MCF 10A (cell line): ENCODE measurements at regions of chr2 and their contacts with region 1.

Region 1: DNA sequence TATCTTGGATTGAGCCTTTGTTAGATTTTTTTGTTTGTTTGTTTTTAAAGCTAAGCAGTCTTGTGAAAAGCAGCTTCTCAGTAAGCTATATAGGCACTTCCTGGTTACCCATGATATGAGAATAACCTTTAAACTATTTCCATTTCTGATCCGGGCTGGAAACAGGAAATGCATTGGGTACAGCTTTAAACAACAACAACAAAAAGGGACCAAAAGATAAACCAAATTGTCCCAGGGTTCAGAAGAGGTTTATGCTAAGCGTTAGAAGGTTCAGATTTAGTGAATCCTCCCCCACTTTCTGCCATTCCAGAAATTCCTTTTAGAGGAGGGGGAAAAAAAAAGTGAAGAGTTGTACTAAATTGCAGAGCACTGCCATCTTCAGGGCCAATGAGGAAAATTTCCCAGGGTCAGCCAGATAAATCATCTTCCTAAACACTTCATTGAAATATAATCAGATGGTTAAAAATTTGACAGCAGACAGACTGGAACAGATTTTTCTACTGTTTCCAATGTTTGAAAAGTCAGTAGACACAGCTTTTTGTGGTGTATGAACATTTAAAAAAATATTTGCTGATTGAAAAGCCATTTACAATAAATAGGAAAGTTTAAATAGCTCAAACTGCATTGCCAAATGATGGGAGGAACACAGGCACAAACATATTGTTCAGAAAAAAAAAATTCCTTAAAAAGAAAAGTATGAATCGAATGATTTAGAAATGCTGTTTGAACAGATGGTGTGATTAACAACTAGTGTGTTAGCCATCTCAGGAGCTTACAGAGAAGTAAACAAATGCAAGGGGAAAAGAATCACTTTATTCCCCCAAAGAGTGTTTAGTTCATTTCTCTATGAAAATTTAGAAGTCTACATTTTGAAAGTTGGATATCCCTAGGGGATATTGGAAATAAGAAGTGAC is 189.9 kb upstream of the TANK start:
- DNase-seq: peak; percentile 77
- H3K4me3 Mint-ChIP-seq: no peak overlapping the region
- H3K27ac Mint-ChIP-seq: peak overlapping the region; percentile 86
- H3K4me1 Mint-ChIP-seq: peaks cover 15% of the 10 kb centered on the region
- H3K27me3 Mint-ChIP-seq: no peaks in the 10 kb centered on the region
- CTCF ChIP-seq: peak; percentile 83

Region 2: DNA sequence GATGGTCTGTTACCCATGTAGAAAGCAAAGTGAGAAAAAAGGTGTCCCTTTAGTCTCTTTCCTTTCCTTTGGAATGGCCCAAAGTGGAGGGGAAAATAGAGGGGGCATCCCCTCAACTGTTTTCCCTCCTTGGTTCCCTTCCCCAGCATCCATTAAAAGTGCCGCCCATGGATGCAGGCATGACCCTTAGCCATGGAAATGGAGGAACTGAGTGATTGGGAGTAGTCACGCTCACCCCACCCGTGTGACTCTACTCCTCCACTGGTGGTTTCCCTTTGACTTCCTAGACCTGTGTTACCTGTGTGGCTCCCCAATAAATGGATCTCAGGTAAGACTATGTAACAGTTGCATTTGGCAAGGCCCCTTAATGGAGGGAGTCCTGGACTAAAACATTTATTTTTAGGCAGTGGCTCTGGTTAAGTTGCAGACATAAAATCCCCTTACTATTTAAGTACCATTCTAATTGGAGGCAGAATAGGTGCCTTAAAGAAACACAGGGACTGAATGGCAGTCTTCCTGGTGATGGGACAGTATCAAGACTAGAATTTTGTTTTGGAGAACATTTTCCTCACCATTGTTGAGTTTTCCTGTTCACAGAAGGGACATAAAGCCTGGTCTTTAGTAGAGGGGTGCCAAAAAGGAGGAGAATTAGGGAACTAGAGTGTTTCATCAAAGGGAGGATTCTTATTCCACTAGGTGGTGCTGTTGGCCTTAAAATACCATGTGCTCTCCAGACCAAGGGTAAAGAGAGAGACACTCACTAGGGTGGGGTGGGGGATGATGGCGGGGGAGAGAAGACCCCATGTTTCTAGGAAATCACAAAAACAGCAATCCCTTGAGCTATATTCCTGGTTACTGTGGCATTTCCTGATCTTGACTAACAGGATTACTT is 882.2 kb before region 1 on chr2:
- CTCF ChIA-PET with region 1: interaction called, 4 read pairs
- POLR2A ChIA-PET with region 1: no interaction called
- intact Hi-C with region 1: loop called (anchors 5 kb)
- DNase-seq: peak; percentile 64
- H3K4me3 Mint-ChIP-seq: no peak overlapping the region
- H3K27ac Mint-ChIP-seq: no peak overlapping the region
- H3K4me1 Mint-ChIP-seq: peaks cover 13% of the 10 kb centered on the region
- H3K27me3 Mint-ChIP-seq: no peaks in the 10 kb centered on the region
- CTCF ChIP-seq: peak; percentile 24

Region 3: DNA sequence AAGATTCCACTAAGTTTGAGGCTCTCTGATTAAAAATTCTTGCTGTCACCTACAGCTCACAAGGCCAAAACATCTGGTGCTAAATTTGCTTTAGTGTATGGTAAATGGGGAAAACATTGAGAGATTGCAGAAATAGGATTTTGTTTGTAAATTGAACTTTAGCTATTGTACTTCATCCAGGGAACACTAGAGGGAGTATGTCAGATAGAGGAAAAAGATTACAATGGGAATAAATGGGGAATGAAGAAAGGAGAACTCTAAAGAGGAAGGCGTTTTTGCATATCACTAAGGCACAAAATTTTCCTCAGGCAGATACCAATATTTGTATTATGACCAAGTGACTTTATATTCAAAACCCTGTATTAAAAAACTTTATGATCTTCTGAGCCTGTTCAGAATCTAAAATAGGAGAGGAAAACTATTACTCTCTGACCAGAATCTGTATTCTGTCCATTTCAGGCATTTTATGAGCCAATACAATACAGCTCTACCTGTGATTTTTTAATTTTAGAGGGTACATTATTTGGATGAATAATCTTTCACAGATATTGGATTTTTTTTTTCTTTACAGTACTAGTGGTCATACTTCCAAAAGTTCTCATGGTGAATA is 717.9 kb before region 1 on chr2:
- CTCF ChIA-PET with region 1: interaction called, 7 read pairs
- POLR2A ChIA-PET with region 1: no interaction called
- intact Hi-C with region 1: loop called (anchors 2 kb)
- DNase-seq: peak; percentile 49
- H3K4me3 Mint-ChIP-seq: no peak overlapping the region
- H3K27ac Mint-ChIP-seq: no peak overlapping the region
- H3K4me1 Mint-ChIP-seq: peaks cover 23% of the 10 kb centered on the region
- H3K27me3 Mint-ChIP-seq: no peaks in the 10 kb centered on the region
- CTCF ChIP-seq: peak; percentile 54

Region 4: DNA sequence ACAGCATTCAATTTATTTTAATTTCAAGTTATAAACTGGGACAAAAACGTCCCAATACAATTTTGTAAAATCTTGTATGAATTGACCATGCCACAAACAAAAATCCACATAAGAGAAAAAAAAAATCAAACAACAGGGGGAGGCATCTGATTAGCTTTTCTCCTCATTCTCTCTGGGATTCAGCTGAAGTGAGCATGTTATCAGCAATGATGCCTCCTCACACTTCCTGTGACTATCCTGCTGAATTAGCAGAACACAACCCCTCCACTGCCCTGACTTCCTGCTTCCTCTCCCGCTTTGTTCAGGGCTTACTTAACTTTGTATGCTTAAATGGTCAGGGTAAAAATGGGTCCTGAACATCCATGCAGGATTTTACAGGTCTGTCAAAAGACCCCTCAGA is 638.0 kb before region 1 on chr2:
- CTCF ChIA-PET with region 1: interaction called, 10 read pairs
- POLR2A ChIA-PET with region 1: interaction called, 3 read pairs
- intact Hi-C with region 1: no loop called
- DNase-seq: no peak
- H3K4me3 Mint-ChIP-seq: no peak overlapping the region
- H3K27ac Mint-ChIP-seq: peak overlapping the region; percentile 42
- H3K4me1 Mint-ChIP-seq: peaks cover 46% of the 10 kb centered on the region
- H3K27me3 Mint-ChIP-seq: no peaks in the 10 kb centered on the region
- CTCF ChIP-seq: no peak

Region 5: GRCh38 chr2:160406591-160407392 is 563.5 kb before region 1 on chr2:
- CTCF ChIA-PET with region 1: interaction called, 11 read pairs
- POLR2A ChIA-PET with region 1: interaction called, 3 read pairs
- intact Hi-C with region 1: loop called (anchors 5 kb)
- DNase-seq: peak; percentile 73
- H3K4me3 Mint-ChIP-seq: peak overlapping the region; percentile 92
- H3K27ac Mint-ChIP-seq: peak overlapping the region; percentile 85
- H3K4me1 Mint-ChIP-seq: peaks cover 39% of the 10 kb centered on the region
- H3K27me3 Mint-ChIP-seq: no peaks in the 10 kb centered on the region
- CTCF ChIP-seq: no peak

Region 6: GRCh38 chr2:160493227-160494028 is 476.9 kb before region 1 on chr2 and contains the start of gene RBMS1:
- CTCF ChIA-PET with region 1: interaction called, 4 read pairs
- POLR2A ChIA-PET with region 1: no interaction called
- intact Hi-C with region 1: loop called (anchors 1 kb)
- DNase-seq: peak; percentile 57
- H3K4me3 Mint-ChIP-seq: peak within 1 kb of the TSS; percentile 82
- H3K27ac Mint-ChIP-seq: peak within 1 kb of the TSS; percentile 83
- H3K4me1 Mint-ChIP-seq: peaks cover 12% of the 10 kb centered on the region
- H3K27me3 Mint-ChIP-seq: peaks cover 12% of the 10 kb centered on the region
- CTCF ChIP-seq: no peak
- total RNA-seq, gene RBMS1: 65.4 and 66.8 TPM in 2 replicates

Region 7: GRCh38 chr2:160994141-160995002 is 24.1 kb after region 1 on chr2:
- CTCF ChIA-PET with region 1: interaction called, 21 read pairs
- POLR2A ChIA-PET with region 1: interaction called, 3 read pairs
- intact Hi-C with region 1: no loop called
- DNase-seq: peak; percentile 87
- H3K4me3 Mint-ChIP-seq: no peak overlapping the region
- H3K27ac Mint-ChIP-seq: no peak overlapping the region
- H3K4me1 Mint-ChIP-seq: peaks cover 9% of the 10 kb centered on the region
- H3K27me3 Mint-ChIP-seq: no peaks in the 10 kb centered on the region
- CTCF ChIP-seq: peak; percentile 76